Caco-2 (cell line): ENCODE measurements at regions of chr11 and their contacts with region 1.

Region 1: GRCh38 chr11:95089620-95090542 is at the start of gene ENDOD1:
- DNase-seq: peak; percentile 89 to 93
- H3K4me3 ChIP-seq: peak within 1 kb of the TSS; percentile 91
- H3K4me3 Mint-ChIP-seq: peak within 1 kb of the TSS; percentile 89
- H3K27ac Mint-ChIP-seq: peak within 1 kb of the TSS; percentile 71
- H3K4me1 ChIP-seq: peaks cover 47% of the 10 kb centered on the region
- H3K4me1 Mint-ChIP-seq: peaks cover 29% of the 10 kb centered on the region
- H3K27me3 ChIP-seq: no peaks in the 10 kb centered on the region
- H3K27me3 Mint-ChIP-seq: peaks cover 5% of the 10 kb centered on the region
- CTCF ChIP-seq: peak; percentile 24 to 40
- total RNA-seq, gene ENDOD1: 22.7 and 23.0 TPM in 2 replicates

Region 2: GRCh38 chr11:95076416-95076815 is 13.5 kb before region 1 on chr11:
- CTCF ChIA-PET with region 1: interaction called, 10 read pairs
- POLR2A ChIA-PET with region 1: interaction called, 3 read pairs
- intact Hi-C with region 1: no loop called
- DNase-seq: peak in 1 of 2 experiments; percentile 41
- H3K4me3 ChIP-seq: no peak overlapping the region
- H3K4me3 Mint-ChIP-seq: no peak overlapping the region
- H3K27ac Mint-ChIP-seq: no peak overlapping the region
- H3K4me1 ChIP-seq: peaks cover 16% of the 10 kb centered on the region
- H3K4me1 Mint-ChIP-seq: peaks cover 8% of the 10 kb centered on the region
- H3K27me3 ChIP-seq: no peaks in the 10 kb centered on the region
- H3K27me3 Mint-ChIP-seq: no peaks in the 10 kb centered on the region
- CTCF ChIP-seq: no peak